ENCODE measurements at regions of chr17 and their contacts with region 1.

Region 1: GRCh38 chr17:29931231-29931932 is 1.4 kb upstream of the SSH2 start:
- DNase-seq: peak; percentile 80
- H3K4me3 Mint-ChIP-seq: no peak overlapping the region
- H3K27ac Mint-ChIP-seq: no peak overlapping the region
- H3K4me1 Mint-ChIP-seq: peaks cover 35% of the 10 kb centered on the region
- H3K27me3 Mint-ChIP-seq: no peaks in the 10 kb centered on the region

Region 2: DNA sequence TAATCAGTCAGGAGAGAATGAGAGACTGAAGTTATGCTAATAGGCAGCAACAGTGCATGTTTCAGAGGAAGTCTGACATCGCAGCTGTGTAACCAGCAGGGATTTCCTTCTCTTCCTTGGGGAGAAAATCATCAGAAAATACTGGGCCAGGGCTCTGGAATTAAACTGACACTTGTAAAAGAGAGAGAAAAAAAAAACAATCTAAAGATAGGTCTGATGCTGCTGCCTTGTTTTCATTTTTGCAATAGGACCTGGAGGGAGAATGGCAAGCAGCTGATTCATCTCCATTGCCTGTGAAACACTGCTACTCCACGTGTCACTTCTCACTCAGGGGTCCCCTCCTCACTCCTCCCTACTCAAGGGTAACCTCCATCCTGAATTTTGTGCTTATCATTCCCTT is 291.0 kb before region 1 on chr17:
- CTCF ChIA-PET with region 1: interaction called, 26 read pairs
- DNase-seq: no peak
- H3K4me3 Mint-ChIP-seq: no peak overlapping the region
- H3K27ac Mint-ChIP-seq: peak overlapping the region; percentile 49
- H3K4me1 Mint-ChIP-seq: peaks cover 24% of the 10 kb centered on the region
- H3K27me3 Mint-ChIP-seq: no peaks in the 10 kb centered on the region

Region 3: DNA sequence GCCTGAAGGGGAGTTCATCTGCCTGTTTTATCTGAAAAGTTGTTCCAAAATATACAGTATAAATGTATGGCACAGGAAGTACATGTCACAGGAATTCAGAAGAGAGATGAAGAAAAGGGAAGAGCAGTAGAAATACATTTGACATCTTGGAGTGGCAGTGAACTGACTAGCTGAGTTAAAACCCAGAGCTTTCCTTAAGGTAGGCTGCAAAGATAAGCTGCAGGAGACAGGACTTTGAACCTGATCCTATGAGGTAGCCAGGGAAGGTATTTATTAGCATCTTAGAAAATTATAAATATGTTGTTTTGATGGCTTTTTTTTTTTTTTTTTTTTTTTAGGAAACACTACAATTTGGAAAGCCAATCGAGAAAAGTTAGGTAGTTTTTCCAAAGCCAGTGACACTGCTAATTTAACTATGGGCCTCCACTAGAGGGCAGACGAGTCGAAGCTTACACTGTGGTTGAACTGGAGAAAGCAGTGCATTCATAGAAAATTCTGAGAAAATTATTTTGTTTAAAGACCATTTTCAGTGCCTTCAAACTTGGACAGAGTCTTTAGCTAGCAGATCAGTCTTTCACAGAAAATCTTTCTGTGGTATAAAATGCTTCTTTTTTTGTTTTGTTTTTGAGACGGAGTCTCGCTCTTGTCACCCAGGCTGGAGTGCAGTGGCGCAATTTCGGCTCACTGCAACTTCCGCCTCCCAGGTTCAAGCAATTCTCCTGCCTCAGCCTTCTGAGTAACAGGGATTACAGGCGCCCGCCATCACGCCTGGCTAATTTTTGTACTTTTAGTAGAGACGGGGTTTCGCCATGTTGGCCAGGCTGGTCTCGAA is 123.6 kb before region 1 on chr17:
- CTCF ChIA-PET with region 1: interaction called, 151 read pairs
- DNase-seq: peak; percentile 83
- H3K4me3 Mint-ChIP-seq: no peak overlapping the region
- H3K27ac Mint-ChIP-seq: no peak overlapping the region
- H3K4me1 Mint-ChIP-seq: peaks cover 26% of the 10 kb centered on the region
- H3K27me3 Mint-ChIP-seq: no peaks in the 10 kb centered on the region

Region 4: GRCh38 chr17:29821897-29822296 is 109.5 kb before region 1 on chr17:
- CTCF ChIA-PET with region 1: interaction called, 10 read pairs
- DNase-seq: no peak
- H3K4me3 Mint-ChIP-seq: no peak overlapping the region
- H3K27ac Mint-ChIP-seq: no peak overlapping the region
- H3K4me1 Mint-ChIP-seq: peaks cover 8% of the 10 kb centered on the region
- H3K27me3 Mint-ChIP-seq: no peaks in the 10 kb centered on the region

Region 5: DNA sequence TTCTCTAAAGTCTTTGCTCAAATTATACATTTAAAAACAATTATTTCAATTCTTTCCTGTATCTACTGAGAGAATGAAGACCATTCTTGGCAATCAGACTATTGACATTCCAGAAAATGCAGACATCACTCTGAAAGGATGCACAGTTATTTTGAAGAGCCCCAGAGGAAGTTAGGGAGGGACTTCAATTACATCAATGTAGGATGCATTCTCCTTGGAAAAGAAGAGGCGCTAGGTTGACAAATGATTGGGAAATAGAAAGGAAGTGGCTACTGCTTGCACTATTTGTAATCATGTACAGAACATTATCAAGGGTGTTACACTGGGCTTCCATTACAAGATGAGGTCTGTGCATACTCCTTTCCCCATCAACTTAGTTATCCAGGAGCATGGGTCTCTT is 75.7 kb before region 1 on chr17:
- CTCF ChIA-PET with region 1: no interaction called
- DNase-seq: no peak
- H3K4me3 Mint-ChIP-seq: no peak overlapping the region
- H3K27ac Mint-ChIP-seq: no peak overlapping the region
- H3K4me1 Mint-ChIP-seq: no peaks in the 10 kb centered on the region
- H3K27me3 Mint-ChIP-seq: no peaks in the 10 kb centered on the region

Region 6: DNA sequence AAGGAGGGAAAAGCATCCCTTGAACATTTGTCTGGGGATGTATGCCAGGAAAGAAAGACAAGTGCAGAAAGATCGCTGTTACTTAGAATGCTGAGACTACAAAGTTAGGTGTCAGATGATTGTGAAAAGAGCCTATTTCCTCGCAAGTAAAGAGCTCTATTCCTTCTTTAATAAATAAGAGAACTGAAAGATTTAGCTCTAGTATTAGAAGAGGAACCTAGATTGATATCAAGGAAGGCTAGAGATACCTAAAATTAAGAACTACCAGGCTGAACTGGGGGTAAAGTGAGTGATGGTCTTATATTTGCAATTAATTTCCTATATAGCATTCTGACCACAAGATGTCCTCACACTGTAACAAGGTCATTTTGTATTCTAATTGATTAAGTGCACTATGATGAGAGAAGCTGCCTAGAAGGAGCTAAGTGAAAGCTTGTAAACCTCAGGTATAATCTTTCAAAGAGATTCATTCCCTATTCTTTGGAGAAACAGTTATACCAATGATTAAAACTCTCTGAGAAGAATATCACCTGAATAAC is 63.7 kb before region 1 on chr17:
- CTCF ChIA-PET with region 1: interaction called, 10 read pairs
- DNase-seq: no peak
- H3K4me3 Mint-ChIP-seq: no peak overlapping the region
- H3K27ac Mint-ChIP-seq: no peak overlapping the region
- H3K4me1 Mint-ChIP-seq: peaks cover 9% of the 10 kb centered on the region
- H3K27me3 Mint-ChIP-seq: no peaks in the 10 kb centered on the region

Region 7: DNA sequence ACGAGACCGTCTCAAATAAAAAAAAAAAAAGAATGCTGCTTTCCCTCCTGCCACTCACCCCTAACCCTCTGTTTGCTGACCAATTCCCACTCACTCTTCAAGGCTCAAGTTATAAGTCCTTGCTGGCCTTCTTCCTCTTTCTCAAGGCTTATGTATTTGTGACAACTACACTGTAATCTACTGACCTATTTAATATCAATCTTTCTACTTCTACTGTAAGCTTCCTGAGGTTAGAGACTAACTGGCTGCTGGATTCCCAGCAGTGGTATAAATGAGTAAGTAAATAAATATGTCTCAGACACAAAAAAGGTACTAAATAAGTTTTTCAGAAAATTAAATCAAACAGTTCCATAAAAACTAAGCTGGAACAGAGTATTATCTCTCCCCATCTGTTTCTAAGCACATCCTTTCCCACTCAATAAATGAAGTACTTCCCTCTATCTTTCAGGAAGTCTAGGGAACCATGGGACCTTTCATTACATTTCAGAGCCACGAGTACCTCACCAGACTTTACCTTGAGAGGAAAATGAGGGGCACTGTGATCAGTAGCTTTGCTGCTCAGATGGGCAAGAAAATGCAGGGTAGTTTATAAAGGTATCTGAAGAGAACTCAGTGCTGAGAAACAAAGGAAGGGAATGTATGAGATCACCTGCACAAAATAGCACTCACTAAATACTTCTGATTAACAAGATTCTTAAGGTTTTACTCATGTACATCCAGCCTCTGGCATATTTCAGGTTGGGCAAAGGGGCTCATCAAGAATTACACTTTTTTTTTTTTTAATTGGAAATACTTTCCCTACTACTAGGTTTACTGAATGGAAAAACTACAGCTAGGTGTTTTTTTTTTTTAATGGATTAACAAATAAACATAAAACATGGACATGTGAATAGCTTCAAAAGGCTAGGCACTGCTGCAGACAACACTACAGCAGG is 12.2 kb before region 1 on chr17:
- CTCF ChIA-PET with region 1: interaction called, 11 read pairs
- DNase-seq: no peak
- H3K4me3 Mint-ChIP-seq: no peak overlapping the region
- H3K27ac Mint-ChIP-seq: no peak overlapping the region
- H3K4me1 Mint-ChIP-seq: peaks cover 12% of the 10 kb centered on the region
- H3K27me3 Mint-ChIP-seq: no peaks in the 10 kb centered on the region

Region 8: GRCh38 chr17:29982991-29983653 is 51.7 kb after region 1 on chr17:
- CTCF ChIA-PET with region 1: no interaction called
- DNase-seq: no peak
- H3K4me3 Mint-ChIP-seq: no peak overlapping the region
- H3K27ac Mint-ChIP-seq: no peak overlapping the region
- H3K4me1 Mint-ChIP-seq: no peaks in the 10 kb centered on the region
- H3K27me3 Mint-ChIP-seq: peaks cover 7% of the 10 kb centered on the region